Left lung (tissue), 14 donors: ENCODE measurements at regions of chr1 and their contacts with region 1.

Region 1: GRCh38 chr1:86370601-86371022 is 25.5 kb downstream of the ODF2L start:
- DNase-seq: no peak
- ATAC-seq: no peak
- H3K4me3 ChIP-seq: no peak overlapping the region
- H3K27ac ChIP-seq: no peak overlapping the region
- H3K4me1 ChIP-seq: no peaks in the 10 kb centered on the region
- H3K27me3 ChIP-seq: no peaks in the 10 kb centered on the region
- CTCF ChIP-seq: no peak

Region 2: DNA sequence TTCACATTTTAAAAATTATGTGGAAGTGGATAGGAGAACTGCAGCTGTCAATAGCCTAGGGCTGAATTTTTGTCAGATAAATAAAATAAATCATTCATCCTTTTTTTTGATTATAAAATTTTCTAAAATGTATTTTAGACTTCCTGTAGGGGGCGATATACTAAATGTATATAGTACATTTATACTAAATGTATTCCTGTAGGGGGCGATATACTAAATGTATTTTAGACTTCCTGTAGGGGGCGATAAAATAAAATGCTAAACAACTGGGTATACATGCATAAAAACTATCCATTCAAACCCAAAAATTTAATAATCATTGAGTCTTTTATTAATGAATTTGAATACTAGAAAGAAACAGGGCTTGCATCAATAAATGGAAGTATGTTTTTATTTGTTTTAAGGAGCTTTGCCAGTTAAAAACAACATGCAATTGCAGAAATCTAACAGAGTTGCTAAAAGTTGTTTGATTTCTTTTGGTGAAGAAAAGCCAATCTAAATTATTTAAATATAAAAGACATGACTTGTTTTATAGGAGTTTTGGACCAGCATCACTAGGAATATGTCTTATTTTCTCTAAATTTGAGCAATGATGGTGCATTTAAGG is 129.5 kb after region 1 on chr1:
- intact Hi-C with region 1: loop called in 1 of 2 experiments (anchors 10 kb)
- DNase-seq: no peak
- ATAC-seq: peak; percentile 27
- H3K4me3 ChIP-seq: no peak overlapping the region
- H3K27ac ChIP-seq: no peak overlapping the region
- H3K4me1 ChIP-seq: peaks cover 0 to 23% of the 10 kb centered on the region in 2 donors
- H3K27me3 ChIP-seq: no peaks in the 10 kb centered on the region
- CTCF ChIP-seq: peak; percentile 69 to 82